Psoas muscle (tissue), 8 donors: ENCODE measurements at regions of chr20 and their contacts with region 1.

Region 1: DNA sequence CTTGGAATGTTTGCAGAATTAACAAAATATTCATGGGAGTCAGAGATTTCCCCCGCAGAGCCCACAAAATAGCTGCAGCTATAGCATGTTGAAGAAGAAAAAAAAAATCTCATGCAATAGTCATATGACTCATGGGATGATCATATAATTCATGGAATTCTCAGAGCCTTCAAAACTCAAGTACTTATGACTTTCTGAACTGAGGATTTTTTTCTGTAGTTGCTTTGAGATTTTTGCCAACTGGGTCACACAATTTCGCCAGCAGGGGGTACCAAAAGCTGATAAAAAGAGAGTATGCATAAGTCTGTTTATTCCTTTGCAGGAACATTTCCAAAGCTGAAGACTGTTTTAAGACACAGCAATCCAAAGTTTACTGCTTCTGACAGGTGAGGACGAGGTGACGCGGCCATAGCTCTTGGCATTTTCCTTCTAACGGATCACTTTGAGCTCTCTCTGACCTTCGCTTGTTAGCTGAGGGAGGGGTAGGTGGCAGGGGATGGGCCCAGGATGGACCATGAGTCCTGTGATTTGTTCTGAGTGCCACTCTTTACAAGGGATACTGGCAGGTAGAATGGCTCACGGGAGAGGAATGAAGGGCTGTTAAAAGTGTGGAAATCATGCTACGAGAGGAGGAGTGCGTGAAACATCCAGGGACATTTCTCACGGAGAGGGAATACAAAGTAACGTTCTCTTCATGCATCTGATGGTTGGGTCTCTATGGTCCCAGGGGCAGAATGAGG is 586.2 kb upstream of the CHD6 start:
- DNase-seq: no peak
- ATAC-seq: no peak
- H3K4me3 ChIP-seq: no peak overlapping the region
- H3K27ac ChIP-seq: no peak overlapping the region
- H3K4me1 ChIP-seq: no peaks in the 10 kb centered on the region
- H3K27me3 ChIP-seq: no peaks in the 10 kb centered on the region
- CTCF ChIP-seq: peak; percentile 29

Region 2: GRCh38 chr20:42530822-42531448 is 326.6 kb after region 1 on chr20:
- intact Hi-C with region 1: loop called in 1 of 2 experiments (anchors 5 kb)
- DNase-seq: no peak
- ATAC-seq: no peak
- H3K4me3 ChIP-seq: no peak overlapping the region
- H3K27ac ChIP-seq: no peak overlapping the region
- H3K4me1 ChIP-seq: no peaks in the 10 kb centered on the region
- H3K27me3 ChIP-seq: no peaks in the 10 kb centered on the region
- CTCF ChIP-seq: peak; percentile 58